Head of caudate nucleus (tissue), 42 donors: ENCODE measurements at regions of chr10 and their contacts with region 1.

Region 1: DNA sequence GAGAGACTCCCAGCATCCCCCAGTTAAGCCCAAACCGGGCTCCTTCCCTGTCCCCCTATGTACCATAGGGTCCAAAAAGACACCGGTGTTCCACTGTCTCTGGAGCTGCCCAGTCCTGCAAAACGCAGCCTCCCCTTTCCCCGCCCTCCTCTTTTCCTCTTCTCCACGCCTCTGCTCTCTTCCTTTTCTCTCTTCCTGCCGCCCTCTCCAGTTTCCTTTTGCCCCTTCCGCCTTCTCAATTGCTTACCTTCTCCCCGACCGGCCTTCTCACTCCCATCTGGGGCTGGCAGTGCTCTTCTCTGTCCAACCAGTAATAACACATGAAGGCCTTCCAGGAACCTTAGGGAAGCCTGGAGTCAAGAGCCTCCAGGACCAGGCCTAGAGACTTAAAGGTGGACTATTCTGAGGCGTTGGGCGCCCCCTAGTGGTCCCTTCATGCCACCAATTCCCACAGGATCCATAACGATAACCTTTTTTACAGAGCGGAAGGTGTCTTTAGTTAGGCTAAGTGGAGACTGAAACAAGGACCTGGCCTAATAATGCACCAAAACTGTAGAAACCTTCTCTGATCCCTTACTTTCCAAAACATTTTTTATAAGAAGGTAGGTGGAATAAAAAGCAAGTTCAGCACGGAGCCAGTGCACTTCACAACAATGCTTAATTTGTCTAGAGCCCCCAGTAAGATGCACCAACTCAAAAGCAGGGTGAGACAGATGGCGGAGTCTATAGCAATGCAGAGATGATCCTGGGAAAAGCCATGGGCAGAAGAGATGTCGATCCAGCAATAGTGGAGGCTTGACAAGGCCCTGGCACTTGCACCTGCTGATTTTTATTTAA is 27.2 kb upstream of the MSRB2 start:
- DNase-seq: peak; percentile 60 to 96 (median 86)

Region 2: DNA sequence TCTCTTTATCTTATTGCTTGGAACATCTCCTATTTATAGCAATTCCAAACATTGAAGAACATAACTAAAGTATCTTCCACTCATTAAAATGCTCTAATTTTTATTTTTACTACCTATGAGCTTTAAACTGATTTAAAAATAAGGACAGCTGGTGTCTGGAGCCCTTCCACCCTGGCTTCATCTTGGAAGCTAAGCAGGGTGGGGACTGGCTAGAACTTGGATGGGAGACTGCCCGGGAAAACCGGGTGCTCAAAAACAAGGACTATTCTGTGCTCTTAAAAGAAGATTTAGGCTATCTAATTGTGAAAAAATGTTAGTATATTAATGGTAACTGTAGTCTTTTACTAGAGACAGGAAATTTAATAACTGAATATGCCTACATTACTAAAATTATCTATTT is 71.1 kb before region 1 on chr10:
- intact Hi-C with region 1: loop called (anchors 10 kb)
- DNase-seq: peak in 19 of 42 donors; percentile 14 to 75 (median 44)

Region 3: GRCh38 chr10:23358357-23358756 is 290.2 kb after region 1 on chr10:
- intact Hi-C with region 1: no loop called
- DNase-seq: peak in 22 of 42 donors; percentile 16 to 77 (median 30)